Common myeloid progenitor, CD34-positive (primary cell): ENCODE measurements at regions of chr11 and their contacts with region 1.

Region 1: DNA sequence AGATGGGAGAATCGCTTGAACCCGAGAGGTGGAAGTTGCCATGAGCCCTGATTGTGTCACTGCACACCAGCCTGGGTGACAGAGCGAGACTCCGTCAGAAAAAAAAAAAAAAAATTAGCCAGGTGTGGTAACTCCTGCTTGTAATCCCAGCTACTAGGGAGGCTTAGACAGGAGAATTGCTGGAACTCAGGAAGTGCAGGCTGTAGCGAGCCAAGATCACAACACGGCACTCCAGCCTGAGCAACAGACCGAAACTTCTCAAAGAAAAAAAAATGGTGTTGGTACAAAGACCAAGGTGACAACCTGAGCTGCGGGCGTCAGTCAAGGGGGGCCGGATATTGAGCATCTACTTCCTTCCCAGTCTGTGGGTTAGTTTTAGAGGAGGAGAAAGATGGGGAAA is 48.4 kb upstream of the HSPA8 start:
- DNase-seq: no peak
- H3K4me3 ChIP-seq: no peak overlapping the region
- H3K27ac ChIP-seq: no peak overlapping the region
- H3K4me1 ChIP-seq: no peaks in the 10 kb centered on the region
- H3K27me3 ChIP-seq: no peaks in the 10 kb centered on the region

Region 2: GRCh38 chr11:123033895-123034294 is 76.5 kb before region 1 on chr11:
- CTCF ChIA-PET with region 1: no interaction called
- POLR2A ChIA-PET with region 1: no interaction called
- DNase-seq: peak in 1 of 3 donors; percentile 19
- H3K4me3 ChIP-seq: no peak overlapping the region
- H3K27ac ChIP-seq: no peak overlapping the region
- H3K4me1 ChIP-seq: no peaks in the 10 kb centered on the region
- H3K27me3 ChIP-seq: no peaks in the 10 kb centered on the region

Region 3: GRCh38 chr11:123096344-123096743 is 14.0 kb before region 1 on chr11:
- CTCF ChIA-PET with region 1: interaction called, 10 read pairs
- POLR2A ChIA-PET with region 1: no interaction called
- DNase-seq: no peak
- H3K4me3 ChIP-seq: no peak overlapping the region
- H3K27ac ChIP-seq: no peak overlapping the region
- H3K4me1 ChIP-seq: no peaks in the 10 kb centered on the region
- H3K27me3 ChIP-seq: peaks cover 0 to 2% (median 0%) of the 10 kb centered on the region in 5 experiments

Region 4: DNA sequence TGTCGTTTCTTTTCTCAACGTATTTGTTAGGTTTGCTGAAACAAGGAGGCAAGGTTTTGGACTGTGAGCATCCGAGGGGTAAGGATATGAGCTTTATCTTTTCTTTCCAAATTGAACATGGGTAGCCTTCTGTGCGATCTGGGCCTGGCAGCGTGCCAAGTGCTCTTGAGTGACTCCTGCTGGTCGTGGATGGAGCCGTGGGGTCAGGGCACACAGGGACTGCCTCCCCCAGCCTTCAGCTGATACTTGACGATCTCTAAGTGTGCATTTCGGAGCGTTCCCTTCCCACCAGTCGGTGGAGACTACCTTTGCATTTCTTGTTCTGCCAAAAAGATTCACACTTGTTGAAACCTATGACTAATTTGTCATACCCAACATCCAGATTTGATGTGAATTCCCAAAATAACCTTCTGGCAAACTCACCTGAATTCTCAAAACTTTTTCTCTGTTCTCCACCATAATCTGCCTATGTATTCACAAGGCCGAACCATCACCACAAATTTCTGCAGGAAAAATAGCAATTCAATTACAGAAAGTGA is 124.8 kb after region 1 on chr11:
- CTCF ChIA-PET with region 1: interaction called, 12 read pairs
- POLR2A ChIA-PET with region 1: no interaction called
- DNase-seq: peak; percentile 51 to 68 (median 68)
- H3K4me3 ChIP-seq: no peak overlapping the region
- H3K27ac ChIP-seq: no peak overlapping the region
- H3K4me1 ChIP-seq: peaks cover 0 to 5% (median 0%) of the 10 kb centered on the region in 4 experiments
- H3K27me3 ChIP-seq: no peaks in the 10 kb centered on the region